Colonic mucosa (tissue), 4 donors: ENCODE measurements at regions of chr21 and their contacts with region 1.

Region 1: DNA sequence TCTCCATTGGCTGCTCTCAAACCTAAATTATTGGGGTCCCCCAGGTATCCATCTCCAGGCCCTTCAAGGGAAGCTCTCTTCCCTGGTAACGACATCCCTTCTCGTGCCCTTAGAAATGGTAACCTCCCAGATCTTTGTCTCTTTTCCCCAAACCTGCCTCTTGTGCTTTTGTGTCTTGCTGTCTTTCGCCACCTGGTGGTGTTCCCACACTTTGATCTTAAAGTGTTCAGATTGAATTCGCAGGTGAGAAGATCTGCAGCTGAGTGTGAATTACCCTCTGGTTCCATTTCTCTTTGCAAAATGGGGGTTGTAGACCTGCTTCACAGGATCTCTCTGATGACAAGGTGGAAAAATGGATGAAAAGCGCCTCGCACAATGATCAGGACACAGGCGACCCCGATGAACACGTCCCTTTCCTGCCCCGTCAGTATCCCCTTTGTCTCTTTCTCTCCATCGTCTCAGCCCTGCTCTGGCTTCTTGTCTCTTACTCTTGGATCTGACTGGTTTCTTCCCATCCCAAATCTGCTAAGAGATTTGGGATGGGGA is 53.1 kb downstream of the DOP1B start:
- DNase-seq: peak; percentile 71
- H3K4me3 ChIP-seq: no peak overlapping the region
- H3K27ac ChIP-seq: no peak overlapping the region
- H3K4me1 ChIP-seq: no peaks in the 10 kb centered on the region
- H3K27me3 ChIP-seq: no peaks in the 10 kb centered on the region
- CTCF ChIP-seq: peak; percentile 20

Region 2: GRCh38 chr21:36149788-36150711 is 59.6 kb before region 1 on chr21:
- intact Hi-C with region 1: loop called (anchors 5 kb)
- DNase-seq: no peak
- H3K4me3 ChIP-seq: no peak overlapping the region
- H3K27ac ChIP-seq: peak overlapping the region; percentile 31
- H3K4me1 ChIP-seq: peaks cover 7% of the 10 kb centered on the region
- H3K27me3 ChIP-seq: no peaks in the 10 kb centered on the region
- CTCF ChIP-seq: no peak